ENCODE measurements at regions of chr17 and their contacts with region 1.

Region 1: GRCh38 chr17:31609996-31610910 is 218.8 kb downstream of the RAB11FIP4 start:
- DNase-seq: no peak
- H3K4me3 ChIP-seq: no peak overlapping the region
- H3K4me3 Mint-ChIP-seq: no peak overlapping the region
- H3K27ac Mint-ChIP-seq: no peak overlapping the region
- H3K4me1 ChIP-seq: no peaks in the 10 kb centered on the region
- H3K4me1 Mint-ChIP-seq: no peaks in the 10 kb centered on the region
- H3K27me3 ChIP-seq: no peaks in the 10 kb centered on the region
- H3K27me3 Mint-ChIP-seq: no peaks in the 10 kb centered on the region
- CTCF ChIP-seq: no peak

Region 2: GRCh38 chr17:31678431-31678830 is 68.2 kb after region 1 on chr17:
- CTCF ChIA-PET with region 1: no interaction called
- POLR2A ChIA-PET with region 1: no interaction called
- intact Hi-C with region 1: loop called (anchors 10 kb)
- DNase-seq: no peak
- H3K4me3 ChIP-seq: no peak overlapping the region
- H3K4me3 Mint-ChIP-seq: no peak overlapping the region
- H3K27ac Mint-ChIP-seq: no peak overlapping the region
- H3K4me1 ChIP-seq: no peaks in the 10 kb centered on the region
- H3K4me1 Mint-ChIP-seq: no peaks in the 10 kb centered on the region
- H3K27me3 ChIP-seq: 0 out of 2 replicates have a peak, but pooled peaks cover 2% of the 10 kb centered on the region
- H3K27me3 Mint-ChIP-seq: peaks cover 9% of the 10 kb centered on the region
- CTCF ChIP-seq: no peak

Region 3: GRCh38 chr17:31926100-31926729 is 316.0 kb after region 1 on chr17:
- CTCF ChIA-PET with region 1: no interaction called
- POLR2A ChIA-PET with region 1: interaction called, 11 read pairs
- intact Hi-C with region 1: no loop called
- DNase-seq: no peak
- H3K4me3 ChIP-seq: no peak overlapping the region
- H3K4me3 Mint-ChIP-seq: no peak overlapping the region
- H3K27ac Mint-ChIP-seq: no peak overlapping the region
- H3K4me1 ChIP-seq: no peaks in the 10 kb centered on the region
- H3K4me1 Mint-ChIP-seq: no peaks in the 10 kb centered on the region
- H3K27me3 ChIP-seq: no peaks in the 10 kb centered on the region
- H3K27me3 Mint-ChIP-seq: no peaks in the 10 kb centered on the region
- CTCF ChIP-seq: no peak

Measured in Caco-2 (cell line).